ENCODE measurements at regions of chr22 and their contacts with region 1.

Region 1: DNA sequence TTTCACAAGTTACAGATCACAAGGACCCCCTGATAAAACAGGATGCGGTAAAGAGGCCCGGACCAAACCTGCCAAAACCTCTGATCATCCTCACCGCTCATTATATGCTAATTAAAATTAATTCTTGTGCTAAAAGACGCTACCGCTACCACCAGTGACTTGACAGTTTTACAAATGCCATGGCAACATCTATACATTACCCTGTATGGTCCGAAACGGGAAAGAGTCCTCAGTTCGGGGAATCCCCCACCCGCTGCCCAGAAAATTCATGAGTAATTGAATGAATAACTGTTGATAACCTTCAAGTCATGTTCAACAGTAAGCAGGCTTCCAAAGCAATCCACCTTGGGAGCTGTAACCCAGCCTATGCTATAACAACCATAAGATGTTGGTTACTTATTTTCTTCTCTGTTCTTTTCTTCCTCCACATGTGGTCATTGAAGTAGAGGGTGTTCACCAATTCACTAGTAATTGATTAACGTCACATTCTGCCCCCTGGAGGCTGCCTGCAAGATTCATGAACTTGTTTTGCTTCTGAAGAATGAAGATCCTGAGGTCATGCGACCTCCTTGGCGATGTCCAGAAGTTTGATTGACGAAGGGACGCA is 20.6 kb downstream of the APOBEC3H start:
- DNase-seq: no peak

Region 2: GRCh38 chr22:39013942-39014722 is 103.6 kb before region 1 on chr22 and contains the start of gene APOBEC3C:
- intact Hi-C with region 1: loop called (anchors 5 to 10 kb)
- DNase-seq: peak; percentile 92
- total RNA-seq, gene APOBEC3C: 18.7 to 31.5 TPM

Region 3: GRCh38 chr22:39087881-39088684 is 29.6 kb before region 1 on chr22:
- intact Hi-C with region 1: no loop called
- DNase-seq: no peak

Measured in posterior vena cava (tissue), 2 donors.